ENCODE measurements at regions of chr3 and their contacts with region 1.

Region 1: DNA sequence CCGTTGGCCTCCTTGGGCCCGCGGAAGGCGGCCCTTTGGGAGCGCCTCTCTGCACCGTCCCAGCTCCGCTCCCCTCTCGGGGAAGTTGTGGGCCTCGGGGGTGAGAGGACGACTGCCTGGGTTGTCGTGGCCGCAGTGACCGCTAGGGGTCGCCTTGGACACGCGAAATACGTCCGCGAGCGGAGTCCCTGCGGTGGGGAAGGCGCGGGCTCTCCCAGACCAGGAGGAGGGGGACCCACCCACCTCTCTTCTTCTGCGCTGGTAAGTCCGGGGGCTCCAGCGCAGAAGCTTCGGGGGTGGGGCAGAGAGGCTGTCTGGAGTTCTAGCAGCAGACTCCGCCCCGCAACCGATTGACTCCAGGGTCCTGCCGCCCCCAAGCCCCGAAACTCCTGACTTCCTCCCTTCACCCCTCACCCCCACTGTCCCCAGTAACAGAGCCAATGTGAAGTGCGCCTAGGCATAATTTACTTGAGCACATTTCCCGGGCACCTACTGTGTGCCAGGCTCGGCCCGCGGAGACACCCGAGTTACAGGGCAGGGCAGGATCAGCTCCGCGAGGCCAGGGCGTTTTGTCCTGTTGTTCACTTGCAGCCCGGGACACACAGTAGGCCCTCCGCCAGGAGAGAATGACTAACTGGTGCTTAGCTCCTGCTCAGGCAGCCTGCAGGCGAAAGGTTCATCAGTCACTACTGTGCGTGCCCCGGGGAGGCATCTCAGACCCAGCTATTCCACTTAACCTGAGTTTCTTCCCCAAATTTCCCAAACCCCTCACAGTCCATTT is 32.8 kb downstream of the DNASE1L3 start:
- H3K4me3 ChIP-seq: peak overlapping the region; percentile 22
- H3K27ac ChIP-seq: no peak overlapping the region
- H3K4me1 ChIP-seq: no peaks in the 10 kb centered on the region
- CTCF ChIP-seq: peak; percentile 71; the same call in 1 of the 2 replicates

Region 2: GRCh38 chr3:58111513-58112186 is 66.3 kb before region 1 on chr3:
- CTCF ChIA-PET with region 1: no interaction called
- POLR2A ChIA-PET with region 1: no interaction called
- H3K4me3 ChIP-seq: no peak overlapping the region
- H3K27ac ChIP-seq: no peak overlapping the region
- H3K4me1 ChIP-seq: no peaks in the 10 kb centered on the region
- CTCF ChIP-seq: no peak

Region 3: DNA sequence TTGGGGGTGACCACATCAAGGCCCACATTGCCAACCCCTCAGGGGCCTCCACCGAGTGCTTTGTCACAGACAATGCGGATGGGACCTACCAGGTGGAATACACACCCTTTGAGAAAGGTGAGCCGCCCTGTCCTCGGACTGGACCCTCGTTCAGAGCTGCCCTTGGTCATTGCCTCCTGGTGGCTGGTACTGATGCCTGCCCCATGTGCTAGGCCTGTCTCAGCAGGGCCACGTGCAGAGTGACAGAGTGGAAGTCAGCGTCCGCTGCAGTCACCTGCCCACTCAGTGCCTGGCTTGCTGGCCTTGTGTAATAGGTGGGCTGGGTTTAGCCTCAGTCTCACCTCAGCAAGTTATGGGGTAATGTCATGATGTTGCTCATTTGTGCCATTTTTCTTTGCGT is 53.5 kb before region 1 on chr3:
- CTCF ChIA-PET with region 1: no interaction called
- POLR2A ChIA-PET with region 1: no interaction called
- H3K4me3 ChIP-seq: no peak overlapping the region
- H3K27ac ChIP-seq: no peak overlapping the region
- H3K4me1 ChIP-seq: no peaks in the 10 kb centered on the region
- CTCF ChIP-seq: no peak

Region 4: GRCh38 chr3:58167431-58168351 is 10.2 kb before region 1 on chr3:
- CTCF ChIA-PET with region 1: interaction called, 34 read pairs
- POLR2A ChIA-PET with region 1: no interaction called
- H3K4me3 ChIP-seq: no peak overlapping the region
- H3K27ac ChIP-seq: no peak overlapping the region
- H3K4me1 ChIP-seq: no peaks in the 10 kb centered on the region
- CTCF ChIP-seq: peak; percentile 36; the same call in 1 of the 2 replicates

Region 5: GRCh38 chr3:59873576-59874230 is 1695.8 kb after region 1 on chr3:
- CTCF ChIA-PET with region 1: no interaction called
- POLR2A ChIA-PET with region 1: no interaction called
- H3K4me3 ChIP-seq: no peak overlapping the region
- H3K27ac ChIP-seq: no peak overlapping the region
- H3K4me1 ChIP-seq: no peaks in the 10 kb centered on the region
- CTCF ChIP-seq: no peak